ENCODE measurements at regions of chr16 and their contacts with region 1.

Region 1: GRCh38 chr16:48535831-48536613 is 74.0 kb downstream of the N4BP1 start:
- DNase-seq: peak; percentile 51
- ATAC-seq: peak; percentile 74 to 82

Region 2: GRCh38 chr16:48365581-48366164 is 170.3 kb before region 1 on chr16:
- intact Hi-C with region 1: loop called in 1 of 2 experiments (anchors 10 kb)
- DNase-seq: peak; percentile 93
- ATAC-seq: peak; percentile 98 to 99

Region 3: DNA sequence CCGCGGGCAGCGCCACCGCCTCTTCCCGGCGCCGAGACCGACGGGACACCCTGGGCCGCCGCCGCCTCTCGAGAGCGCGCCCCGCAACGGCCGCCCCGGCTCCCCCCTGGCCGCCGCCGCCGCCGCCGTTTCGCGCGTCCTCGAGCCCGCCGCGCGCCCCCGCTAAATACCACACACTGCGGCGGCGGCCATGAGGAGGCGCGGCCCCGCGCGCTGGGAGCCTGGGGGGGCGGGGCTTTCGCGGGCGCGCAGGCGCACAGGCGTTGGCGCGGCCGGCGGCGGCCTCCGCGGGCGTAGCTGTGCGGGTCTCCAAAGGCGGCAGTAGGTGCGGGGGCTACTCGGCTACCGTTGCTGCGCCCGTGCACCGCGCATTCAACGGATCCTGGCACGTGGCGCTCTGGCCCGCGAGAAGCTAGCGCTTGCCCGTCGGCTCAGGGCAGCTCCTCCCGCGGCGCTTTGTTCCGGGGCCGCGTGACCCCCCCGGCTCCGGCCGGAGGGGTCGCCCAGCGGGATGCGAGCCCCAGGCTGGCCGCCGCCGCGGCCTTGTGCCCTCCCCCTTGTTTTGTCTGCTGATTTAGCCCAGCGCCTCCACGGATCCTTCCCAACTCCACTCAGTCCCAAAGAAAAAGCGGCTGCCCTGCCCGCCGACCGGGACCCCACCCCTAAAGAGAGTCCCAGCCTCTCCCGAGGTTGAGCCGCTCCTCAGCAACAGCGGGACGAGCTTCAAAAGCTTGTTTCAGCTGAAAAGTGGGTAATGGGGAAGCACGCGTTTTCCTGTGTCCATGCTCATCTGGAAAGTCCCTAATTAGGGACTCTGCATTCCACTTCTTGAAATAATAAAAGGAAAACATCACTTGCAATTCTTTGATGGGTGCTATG is 150.5 kb before region 1 on chr16 and contains the start of gene SIAH1:
- intact Hi-C with region 1: loop called in 1 of 2 experiments (anchors 10 kb)
- DNase-seq: peak; percentile 88
- ATAC-seq: peak; percentile 93 to 96
- total RNA-seq, gene SIAH1: 11.6 to 18.0 TPM

Measured in left cardiac atrium (tissue), 4 donors.